CD4-positive, alpha-beta memory T cell (primary cell): ENCODE measurements at regions of chr2 and their contacts with region 1.

Region 1: GRCh38 chr2:119301413-119301812 is 65.2 kb downstream of the C2orf76 start:
- DNase-seq: no peak
- H3K4me3 ChIP-seq: no peak overlapping the region
- H3K4me3 Mint-ChIP-seq: no peak overlapping the region
- H3K27ac ChIP-seq: no peak overlapping the region
- H3K27ac Mint-ChIP-seq: no peak overlapping the region
- H3K4me1 ChIP-seq: no peaks in the 10 kb centered on the region
- H3K4me1 Mint-ChIP-seq: peaks cover 0 to 2% (median 0%) of the 10 kb centered on the region in 4 donors
- H3K27me3 ChIP-seq: no peaks in the 10 kb centered on the region
- H3K27me3 Mint-ChIP-seq: no peaks in the 10 kb centered on the region

Region 2: GRCh38 chr2:119290859-119291587 is 10.4 kb before region 1 on chr2:
- CTCF ChIA-PET with region 1: interaction called, 10 read pairs
- POLR2A ChIA-PET with region 1: no interaction called
- intact Hi-C with region 1: no loop called
- DNase-seq: peak in 3 of 5 donors; percentile 29 to 63 (median 42)
- H3K4me3 ChIP-seq: no peak overlapping the region
- H3K4me3 Mint-ChIP-seq: no peak overlapping the region
- H3K27ac ChIP-seq: no peak overlapping the region
- H3K27ac Mint-ChIP-seq: no peak overlapping the region
- H3K4me1 ChIP-seq: peaks cover 3% of the 10 kb centered on the region
- H3K4me1 Mint-ChIP-seq: peaks cover 0 to 4% (median 0%) of the 10 kb centered on the region in 4 donors
- H3K27me3 ChIP-seq: no peaks in the 10 kb centered on the region
- H3K27me3 Mint-ChIP-seq: no peaks in the 10 kb centered on the region